CD4-positive, alpha-beta T cell (primary cell): ENCODE measurements at regions of chr20 and their contacts with region 1.

Region 1: DNA sequence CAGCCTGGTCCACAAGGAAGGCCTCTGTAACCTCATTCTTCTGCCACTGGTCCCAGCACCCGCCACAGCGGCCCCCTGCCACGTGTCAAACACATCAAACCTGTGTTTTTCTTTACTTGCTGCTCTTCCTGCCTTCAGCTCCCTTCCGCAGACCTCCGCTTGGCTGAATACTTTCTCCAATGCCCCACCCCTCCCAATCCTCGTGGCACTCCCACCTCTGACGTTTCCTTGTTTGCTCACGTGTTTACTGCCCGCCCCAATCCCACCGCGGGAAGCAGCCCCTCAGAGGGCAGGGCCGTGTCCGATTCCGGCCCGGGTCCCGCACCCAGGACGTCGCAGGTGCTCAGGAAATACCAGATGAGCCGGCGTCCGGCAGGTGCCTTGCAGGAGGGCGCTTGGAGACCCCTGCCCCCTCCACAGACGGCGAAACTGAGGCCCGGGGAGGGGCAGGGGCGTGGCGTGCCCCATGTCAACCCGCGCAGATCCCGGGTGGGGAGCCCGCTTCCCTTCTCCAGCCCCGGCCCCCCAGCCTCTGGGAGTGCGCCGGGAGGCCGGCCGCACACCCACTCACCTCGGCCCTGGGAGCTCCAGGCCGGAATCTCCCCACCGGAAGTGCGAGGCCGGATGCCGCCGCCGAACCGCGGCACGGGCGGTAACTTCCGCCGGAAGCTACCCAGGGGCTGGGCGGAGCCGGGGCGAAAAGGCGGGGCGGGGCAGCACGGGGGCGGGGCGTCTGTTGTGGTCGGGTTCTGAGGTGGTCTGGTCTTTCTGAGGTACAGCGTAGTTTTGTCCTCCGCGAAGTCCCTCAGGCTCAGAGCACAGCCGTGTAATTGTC is 42.4 kb downstream of the ELMO2 start:
- DNase-seq: peak; percentile 78 to 94 (median 84)
- ATAC-seq: peak; percentile 73
- H3K4me3 ChIP-seq: peak overlapping the region; percentile 96
- H3K4me3 Mint-ChIP-seq: peak overlapping the region; percentile 90
- H3K27ac ChIP-seq: peak overlapping the region; percentile 100
- H3K27ac Mint-ChIP-seq: peak overlapping the region; percentile 84
- H3K4me1 ChIP-seq: peaks cover 81% of the 10 kb centered on the region
- H3K4me1 Mint-ChIP-seq: peaks cover 77% of the 10 kb centered on the region
- H3K27me3 ChIP-seq: no peaks in the 10 kb centered on the region
- H3K27me3 Mint-ChIP-seq: no peaks in the 10 kb centered on the region
- CTCF ChIP-seq: no peak

Region 2: DNA sequence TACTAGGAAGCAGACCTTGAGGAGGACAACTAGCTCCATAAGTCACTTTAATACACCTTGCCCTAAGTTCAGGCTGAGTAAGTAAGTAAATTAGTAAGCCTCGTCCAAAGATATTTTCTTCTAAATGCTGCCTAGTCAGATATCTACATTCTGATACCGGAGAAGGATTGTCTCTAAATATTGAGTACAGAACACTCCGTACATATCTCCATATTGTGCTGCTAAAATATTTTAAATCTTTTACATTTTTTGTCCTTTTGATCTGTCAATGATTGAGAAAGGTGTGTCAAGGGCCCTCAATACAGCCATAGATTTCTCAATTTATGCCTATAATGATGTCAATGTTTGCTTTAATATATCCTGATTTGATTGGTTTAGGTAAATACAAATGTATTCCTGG is 788.1 kb before region 1 on chr20:
- CTCF ChIA-PET with region 1: no interaction called
- POLR2A ChIA-PET with region 1: no interaction called
- intact Hi-C with region 1: no loop called
- DNase-seq: no peak
- ATAC-seq: no peak
- H3K4me3 ChIP-seq: no peak overlapping the region
- H3K4me3 Mint-ChIP-seq: no peak overlapping the region
- H3K27ac ChIP-seq: no peak overlapping the region
- H3K27ac Mint-ChIP-seq: no peak overlapping the region
- H3K4me1 ChIP-seq: no peaks in the 10 kb centered on the region
- H3K4me1 Mint-ChIP-seq: no peaks in the 10 kb centered on the region
- H3K27me3 ChIP-seq: peaks cover 0 to 10% of the 10 kb centered on the region in 2 experiments
- H3K27me3 Mint-ChIP-seq: peaks cover 34% of the 10 kb centered on the region
- CTCF ChIP-seq: no peak

Region 3: GRCh38 chr20:45798935-45799642 is 564.9 kb before region 1 on chr20:
- CTCF ChIA-PET with region 1: no interaction called
- POLR2A ChIA-PET with region 1: no interaction called
- intact Hi-C with region 1: loop called in 1 of 2 experiments (anchors 10 kb)
- DNase-seq: peak; percentile 43 to 79 (median 57)
- ATAC-seq: peak; percentile 99
- H3K4me3 ChIP-seq: no peak overlapping the region
- H3K4me3 Mint-ChIP-seq: no peak overlapping the region
- H3K27ac ChIP-seq: peak overlapping the region in 1 of 2 donors; percentile 1
- H3K27ac Mint-ChIP-seq: no peak overlapping the region
- H3K4me1 ChIP-seq: peaks cover 5% of the 10 kb centered on the region
- H3K4me1 Mint-ChIP-seq: peaks cover 15% of the 10 kb centered on the region
- H3K27me3 ChIP-seq: no peaks in the 10 kb centered on the region
- H3K27me3 Mint-ChIP-seq: no peaks in the 10 kb centered on the region
- CTCF ChIP-seq: peak; percentile 75

Region 4: GRCh38 chr20:46089417-46090388 is 274.3 kb before region 1 on chr20 and contains the start of gene NCOA5:
- CTCF ChIA-PET with region 1: no interaction called
- POLR2A ChIA-PET with region 1: interaction called, 5 read pairs
- intact Hi-C with region 1: loop called in 1 of 2 experiments (anchors 2 kb)
- DNase-seq: peak; percentile 86 to 97 (median 92)
- ATAC-seq: peak; percentile 90
- H3K4me3 ChIP-seq: peak within 1 kb of the TSS; percentile 95
- H3K4me3 Mint-ChIP-seq: peak within 1 kb of the TSS; percentile 94
- H3K27ac ChIP-seq: peak within 1 kb of the TSS; percentile 67 to 85
- H3K27ac Mint-ChIP-seq: peak within 1 kb of the TSS; percentile 86
- H3K4me1 ChIP-seq: peaks cover 22% of the 10 kb centered on the region
- H3K4me1 Mint-ChIP-seq: peaks cover 54% of the 10 kb centered on the region
- H3K27me3 ChIP-seq: peaks cover 0 to 3% of the 10 kb centered on the region in 2 experiments
- H3K27me3 Mint-ChIP-seq: no peaks in the 10 kb centered on the region
- CTCF ChIP-seq: no peak
- total RNA-seq, gene NCOA5: 9.7 to 10.5 TPM

Region 5: DNA sequence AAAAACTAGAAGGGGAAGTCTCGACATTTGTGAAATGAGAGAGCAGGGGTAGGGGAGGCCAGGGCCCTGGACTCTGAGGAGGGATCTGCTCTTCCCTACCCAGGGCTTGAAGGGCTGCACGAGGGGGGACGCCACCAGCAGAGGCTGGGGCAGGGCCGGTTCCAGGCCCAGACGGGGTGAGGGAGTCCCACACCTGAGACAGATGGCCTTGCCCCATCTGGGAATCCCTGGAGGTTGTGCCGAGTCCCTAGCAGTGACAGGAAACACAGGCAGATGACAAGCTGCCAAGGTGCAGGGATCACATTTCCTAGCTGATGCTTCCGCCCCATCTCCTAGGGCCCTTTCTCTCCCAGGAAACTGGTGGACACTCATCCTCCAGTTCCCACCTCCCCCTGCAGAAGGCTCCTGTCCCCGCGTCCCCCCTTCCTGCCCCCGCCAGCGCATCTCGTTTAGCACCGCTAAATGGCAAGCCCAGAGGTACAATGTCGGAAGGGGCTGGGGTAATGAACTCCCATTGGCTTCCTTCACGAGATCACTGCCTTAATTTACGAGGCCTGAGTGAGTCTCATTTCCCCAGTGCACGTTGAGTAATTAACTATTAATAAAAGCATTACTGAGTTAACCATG is 20.6 kb before region 1 on chr20:
- CTCF ChIA-PET with region 1: interaction called, 7 read pairs
- POLR2A ChIA-PET with region 1: interaction called, 14 read pairs
- intact Hi-C with region 1: no loop called
- DNase-seq: no peak
- ATAC-seq: peak; percentile 46
- H3K4me3 ChIP-seq: peak overlapping the region; percentile 34
- H3K4me3 Mint-ChIP-seq: peak overlapping the region; percentile 84
- H3K27ac ChIP-seq: no peak overlapping the region
- H3K27ac Mint-ChIP-seq: peak overlapping the region; percentile 66
- H3K4me1 ChIP-seq: peaks cover 21% of the 10 kb centered on the region
- H3K4me1 Mint-ChIP-seq: peaks cover 30% of the 10 kb centered on the region
- H3K27me3 ChIP-seq: peaks cover 10 to 19% of the 10 kb centered on the region in 2 experiments
- H3K27me3 Mint-ChIP-seq: peaks cover 20% of the 10 kb centered on the region
- CTCF ChIP-seq: no peak

Region 6: GRCh38 chr20:46375771-46376170 is 11.8 kb after region 1 on chr20:
- CTCF ChIA-PET with region 1: no interaction called
- POLR2A ChIA-PET with region 1: interaction called, 33 read pairs
- intact Hi-C with region 1: no loop called
- DNase-seq: no peak
- ATAC-seq: no peak
- H3K4me3 ChIP-seq: no peak overlapping the region
- H3K4me3 Mint-ChIP-seq: no peak overlapping the region
- H3K27ac ChIP-seq: no peak overlapping the region
- H3K27ac Mint-ChIP-seq: peak overlapping the region; percentile 12
- H3K4me1 ChIP-seq: no peaks in the 10 kb centered on the region
- H3K4me1 Mint-ChIP-seq: no peaks in the 10 kb centered on the region
- H3K27me3 ChIP-seq: no peaks in the 10 kb centered on the region
- H3K27me3 Mint-ChIP-seq: no peaks in the 10 kb centered on the region
- CTCF ChIP-seq: no peak

Region 7: DNA sequence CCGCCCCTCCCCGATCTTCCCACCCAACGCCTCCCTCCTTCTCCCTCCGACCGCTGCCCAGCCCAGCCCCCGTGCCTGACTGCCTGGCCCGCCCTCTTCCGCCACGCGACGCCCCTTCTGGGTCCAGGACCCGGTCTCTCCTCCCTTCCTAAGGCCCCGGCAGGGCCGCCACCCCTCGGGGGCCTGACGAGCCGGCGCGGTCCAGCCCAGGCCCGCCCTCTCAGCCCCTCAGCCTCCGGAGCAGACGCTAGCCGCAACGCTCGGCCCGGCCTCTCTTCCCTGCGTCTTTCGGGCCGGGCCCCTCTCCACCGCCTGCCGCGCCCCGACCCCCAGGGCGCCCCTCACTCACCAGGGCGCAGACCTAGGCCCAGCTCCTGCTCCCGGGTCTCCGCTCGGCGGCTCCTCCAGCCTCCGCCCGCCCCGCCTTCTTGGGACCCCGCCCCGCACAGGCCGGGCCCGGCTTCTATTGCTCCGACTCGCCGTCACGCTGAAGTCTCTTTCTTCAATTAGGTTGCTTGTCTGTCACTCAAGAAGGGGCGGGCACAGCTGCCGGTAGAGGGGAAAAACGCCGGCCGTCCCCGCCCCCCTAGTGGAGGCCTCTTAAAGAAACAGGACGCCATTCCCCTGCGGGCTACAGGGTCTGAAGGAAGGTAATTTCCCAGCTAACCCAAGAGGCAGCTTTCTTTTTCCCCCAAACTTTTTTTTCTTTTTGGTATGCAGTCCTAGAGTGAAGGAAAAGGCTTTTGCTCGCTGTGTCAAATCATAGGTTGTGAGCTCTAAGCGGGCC is 42.4 kb after region 1 on chr20 and contains the start of gene ELMO2:
- CTCF ChIA-PET with region 1: interaction called, 8 read pairs
- POLR2A ChIA-PET with region 1: no interaction called
- intact Hi-C with region 1: loop called (anchors 1 kb)
- DNase-seq: peak; percentile 88 to 98 (median 94)
- ATAC-seq: peak; percentile 88
- H3K4me3 ChIP-seq: peak within 1 kb of the TSS; percentile 85
- H3K4me3 Mint-ChIP-seq: peak within 1 kb of the TSS; percentile 99
- H3K27ac ChIP-seq: peak within 1 kb of the TSS; percentile 76 to 92
- H3K27ac Mint-ChIP-seq: peak within 1 kb of the TSS; percentile 95
- H3K4me1 ChIP-seq: peaks cover 70% of the 10 kb centered on the region
- H3K4me1 Mint-ChIP-seq: peaks cover 74% of the 10 kb centered on the region
- H3K27me3 ChIP-seq: no peaks in the 10 kb centered on the region
- H3K27me3 Mint-ChIP-seq: no peaks in the 10 kb centered on the region
- CTCF ChIP-seq: no peak
- total RNA-seq, gene ELMO2: 85.6 TPM